Right ventricle myocardium inferior (tissue), 1 donor: ENCODE measurements at regions of chr16 and their contacts with region 1.

Region 1: DNA sequence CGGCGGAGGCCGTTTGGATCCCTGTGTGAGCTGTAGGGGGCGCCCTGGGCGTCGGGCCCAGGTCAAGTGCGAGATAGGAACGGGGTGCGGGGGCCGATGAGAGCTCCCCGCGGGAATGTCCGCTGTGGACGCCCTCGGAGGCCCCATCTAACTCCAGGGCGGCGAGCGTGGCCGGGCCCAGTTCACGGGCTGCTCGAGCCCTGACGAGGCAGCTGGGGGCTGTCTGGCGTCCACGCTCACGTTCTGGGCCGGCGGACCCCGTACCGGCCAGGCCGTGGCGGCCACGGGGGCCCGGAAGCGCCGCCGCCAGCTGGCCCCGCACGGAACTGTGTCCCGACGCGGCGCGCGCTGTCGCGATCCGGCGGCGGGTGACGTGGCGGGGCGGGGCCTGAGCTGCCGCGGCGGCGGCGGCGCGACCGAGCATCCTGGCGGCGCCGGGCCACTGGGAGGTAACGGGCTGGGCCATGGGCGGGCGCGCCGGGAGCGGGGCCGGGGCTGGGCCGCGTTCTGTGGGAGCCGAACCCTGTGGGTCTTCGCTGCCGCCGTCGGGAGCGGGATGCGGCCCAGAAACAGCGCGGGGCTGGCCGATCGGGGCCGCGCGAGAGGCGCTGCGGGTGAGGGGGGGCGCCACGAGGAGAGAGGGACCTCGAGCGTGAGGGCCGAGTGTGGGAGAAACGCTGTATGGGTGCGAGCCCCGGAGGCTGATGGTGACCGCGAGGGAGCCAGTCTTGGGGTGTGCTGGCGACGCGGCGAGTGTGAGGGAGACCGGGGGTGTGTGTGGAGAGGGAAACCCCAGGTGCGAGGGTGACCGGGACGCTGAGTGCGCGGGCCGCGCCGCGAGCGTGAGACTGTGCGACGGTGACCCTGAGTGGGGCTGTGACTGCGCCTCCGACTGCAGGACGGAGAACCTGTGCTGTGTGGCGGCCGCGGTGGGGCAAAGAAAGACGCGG is at the start of gene SLC7A6:
- DNase-seq: peak; percentile 92
- ATAC-seq: peak; percentile 77
- total RNA-seq, gene SLC7A6: 33.7 TPM

Region 2: GRCh38 chr16:68155425-68155824 is 109.0 kb before region 1 on chr16:
- intact Hi-C with region 1: no loop called
- DNase-seq: no peak
- ATAC-seq: no peak

Region 3: DNA sequence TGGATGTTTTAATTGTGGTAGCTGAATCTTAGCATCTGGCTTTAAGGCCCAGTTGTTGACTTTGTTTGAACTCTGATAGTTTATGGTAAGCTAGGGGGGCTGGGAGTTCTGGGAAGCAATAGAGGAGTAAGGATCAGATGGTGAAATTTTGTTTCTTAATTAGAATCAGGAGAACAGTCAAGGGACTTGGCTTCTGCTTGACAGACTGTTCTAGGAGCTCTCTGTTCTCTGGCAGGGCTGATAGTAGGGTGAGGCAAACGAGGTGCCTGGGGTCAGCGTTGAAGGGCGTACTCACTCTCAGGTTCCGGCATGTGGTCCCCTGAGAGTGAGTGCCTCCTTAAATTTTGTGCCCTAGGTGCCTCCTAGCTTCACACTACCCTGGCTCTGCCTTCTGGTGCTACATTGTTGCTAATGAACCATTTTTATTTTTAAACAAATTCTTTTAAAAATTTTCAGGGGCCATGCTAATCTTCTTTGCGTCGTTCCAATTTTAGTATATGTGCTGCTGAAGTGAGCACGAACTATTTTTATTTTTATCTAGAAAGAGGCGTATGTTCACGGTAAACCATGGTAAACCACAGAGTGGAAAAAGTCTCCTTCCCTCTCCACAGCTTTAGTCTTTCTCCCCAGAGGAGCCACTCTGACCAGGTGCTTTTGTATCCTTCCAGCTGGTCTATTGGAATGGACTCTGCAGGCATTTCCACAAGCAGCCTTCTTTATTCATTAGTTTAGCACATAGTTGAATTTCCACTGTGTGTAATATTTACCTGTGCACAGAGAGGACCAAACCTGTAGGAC is 19.6 kb after region 1 on chr16:
- intact Hi-C with region 1: loop called (anchors 2 kb)
- DNase-seq: no peak
- ATAC-seq: peak; percentile 77

Region 4: DNA sequence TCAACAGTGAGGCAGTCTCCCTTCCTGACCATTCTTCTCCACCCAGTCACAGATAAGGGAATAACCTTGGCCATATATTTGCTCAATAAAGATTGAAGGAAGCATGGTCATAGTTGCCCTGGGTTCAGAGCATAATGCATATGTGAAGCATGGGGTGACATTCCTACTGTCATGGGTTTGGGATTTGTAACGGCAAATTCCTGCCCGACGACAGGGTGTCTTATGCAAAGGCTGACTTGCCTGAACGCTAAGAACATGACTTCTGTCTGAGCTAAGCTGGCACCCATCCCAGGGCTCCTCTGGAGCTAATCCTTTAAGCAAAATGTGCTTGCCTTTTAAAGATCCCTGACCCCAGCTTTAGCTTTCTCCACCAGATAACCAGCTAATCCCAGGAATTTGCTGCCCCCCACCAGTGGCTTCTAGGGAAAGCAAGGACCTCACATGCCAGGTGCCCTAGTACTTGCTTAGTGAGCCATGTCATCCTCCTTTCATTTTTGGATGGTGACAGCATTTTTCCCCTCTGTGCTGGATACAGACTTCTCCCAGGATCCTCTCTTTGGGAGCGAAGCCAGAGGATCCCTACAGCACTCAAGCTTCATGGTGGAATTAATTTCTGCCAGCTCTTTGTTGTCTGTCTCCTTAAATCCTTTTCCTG is 34.6 kb after region 1 on chr16:
- intact Hi-C with region 1: loop called (anchors 5 kb)
- DNase-seq: no peak
- ATAC-seq: peak; percentile 33

Region 5: GRCh38 chr16:68310761-68311511 is 46.5 kb after region 1 on chr16 and contains the starts of genes PRMT7 and SLC7A6OS:
- intact Hi-C with region 1: loop called (anchors 2 kb)
- DNase-seq: peak; percentile 97
- ATAC-seq: peak; percentile 100
- total RNA-seq, gene PRMT7: 28.9 TPM
- total RNA-seq, gene SLC7A6OS: 12.4 TPM

Region 6: DNA sequence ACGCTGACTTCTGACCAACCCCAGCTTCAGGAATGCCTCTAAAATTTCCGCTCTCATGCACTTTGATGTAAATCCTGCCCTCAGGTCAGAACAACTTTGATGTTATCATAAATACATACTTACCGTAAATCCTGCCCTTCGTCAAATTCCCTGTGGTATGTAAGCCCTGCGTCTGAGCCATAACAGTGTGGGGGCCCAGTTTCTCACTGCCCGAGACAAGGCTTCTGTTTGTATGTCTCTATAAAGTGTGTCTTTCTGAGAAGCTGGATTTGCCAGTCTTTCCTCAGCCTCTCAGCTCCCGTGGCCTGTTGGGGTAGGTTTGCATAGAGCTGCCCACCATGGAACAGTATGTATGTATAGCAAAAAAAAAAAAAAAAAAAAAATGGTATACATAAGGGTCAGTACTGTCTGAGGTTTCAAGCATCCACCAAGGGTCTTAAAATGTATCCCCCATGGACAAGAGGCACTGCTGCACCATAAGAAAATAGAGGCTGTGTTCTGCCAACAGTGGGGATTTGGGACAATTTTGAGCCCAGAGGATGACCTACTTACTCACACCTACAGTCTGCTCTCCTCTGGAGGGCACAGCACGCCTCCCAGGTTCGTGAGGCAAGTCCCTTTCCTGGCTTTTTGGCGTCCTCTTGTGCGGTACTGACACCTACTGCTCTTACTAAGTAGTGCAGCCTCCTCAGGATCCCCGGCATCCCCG is 63.9 kb after region 1 on chr16:
- intact Hi-C with region 1: loop called (anchors 1 kb)
- DNase-seq: peak; percentile 88
- ATAC-seq: peak; percentile 92